ENCODE measurements at regions of chr11 and their contacts with region 1.

Region 1: DNA sequence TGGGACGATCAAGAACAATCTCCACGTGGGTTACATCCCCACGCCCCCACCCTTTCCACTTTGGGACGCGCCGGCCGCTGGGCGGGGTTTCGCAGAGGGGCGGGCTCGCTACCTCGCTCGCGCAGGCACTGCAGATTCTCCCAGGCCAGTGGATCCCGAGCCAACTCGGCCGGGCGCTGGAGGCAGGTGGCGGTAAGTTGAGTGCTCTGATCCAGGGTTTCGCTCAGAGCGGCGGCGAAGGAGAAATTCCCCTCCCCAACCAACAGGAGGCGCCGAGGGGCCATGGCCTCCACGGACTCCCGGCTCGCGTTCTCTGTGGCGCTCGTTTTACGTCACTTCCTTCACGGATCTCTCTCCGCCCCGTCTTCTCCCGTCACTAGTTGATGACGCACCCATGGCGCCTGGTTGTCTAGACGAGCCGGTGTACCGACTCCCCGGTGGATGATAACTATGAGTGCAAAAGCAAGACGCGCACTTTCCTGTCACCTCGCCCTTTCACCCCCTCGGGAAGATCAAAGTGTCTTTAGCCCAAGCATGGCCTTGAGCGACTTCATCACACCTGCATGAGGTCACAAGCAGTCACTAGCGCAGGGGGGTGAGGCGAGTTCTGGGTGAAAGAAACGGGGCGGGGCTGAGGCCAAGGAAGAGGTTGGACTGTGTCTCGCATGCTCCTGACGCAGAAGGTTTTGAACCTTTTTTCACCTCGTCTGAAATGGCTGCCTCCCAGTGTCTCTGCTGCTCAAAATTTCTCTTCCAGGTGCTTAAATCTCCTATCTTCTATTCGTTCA is at the starts of genes CFAP68 and FDXACB1:
- DNase-seq: peak; percentile 96
- ATAC-seq: peak; percentile 96
- total RNA-seq, gene CFAP68: 32.4 TPM
- total RNA-seq, gene FDXACB1: 0.86 TPM

Region 2: GRCh38 chr11:111913997-111914396 is 35.0 kb after region 1 on chr11:
- intact Hi-C with region 1: no loop called
- DNase-seq: peak; percentile 62
- ATAC-seq: peak; percentile 13

Region 3: DNA sequence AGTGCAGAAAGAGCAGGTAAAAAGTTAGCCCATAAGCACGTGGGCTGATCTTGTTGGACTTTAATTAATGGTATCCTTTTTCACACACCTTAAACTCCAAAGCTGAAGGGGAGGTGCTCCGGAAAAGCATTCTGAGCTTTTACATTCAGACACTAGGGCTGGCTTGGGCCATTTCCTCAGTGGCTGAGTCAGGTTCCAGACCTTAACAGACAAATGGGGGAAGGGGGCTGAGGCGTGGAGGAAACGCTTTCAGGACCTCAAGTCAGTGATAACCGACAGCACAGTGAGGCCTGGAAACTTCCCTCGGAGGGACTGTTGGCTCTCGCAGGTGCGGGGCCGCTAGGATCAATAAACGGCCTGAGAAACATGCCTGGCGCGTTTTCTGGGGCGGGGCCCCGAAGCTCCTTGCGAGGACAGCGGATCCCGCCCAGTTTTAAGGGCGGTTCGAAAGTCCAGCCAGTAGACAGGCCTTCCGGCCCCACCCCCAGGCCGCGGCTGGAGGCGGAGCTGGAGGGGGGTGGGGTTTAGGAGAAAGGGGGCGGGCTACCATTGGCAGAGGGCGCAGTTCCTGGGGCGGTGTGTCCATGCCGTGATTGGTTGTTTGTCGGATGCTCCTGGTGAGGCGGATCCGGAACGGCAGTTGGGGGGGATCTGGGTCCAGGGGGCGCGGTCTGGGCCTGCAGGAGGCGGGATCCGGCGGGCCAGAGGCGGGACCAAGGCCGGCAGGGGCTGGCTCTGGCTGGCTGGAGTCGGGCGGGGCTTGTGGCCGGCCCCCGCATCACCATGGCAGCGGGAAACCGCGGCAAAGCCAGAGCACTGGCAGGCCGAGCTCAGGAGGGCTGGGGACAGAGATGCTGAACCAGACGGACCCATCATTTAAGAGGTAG is 47.7 kb after region 1 on chr11:
- intact Hi-C with region 1: loop called (anchors 5 kb)
- DNase-seq: peak; percentile 98
- ATAC-seq: peak; percentile 94

Region 4: GRCh38 chr11:111982019-111982464 is 103.0 kb after region 1 on chr11:
- intact Hi-C with region 1: loop called (anchors 5 kb)
- DNase-seq: peak; percentile 57
- ATAC-seq: peak; percentile 67

Region 5: GRCh38 chr11:112086422-112087191 is 207.6 kb after region 1 on chr11 and contains the starts of genes SDHD and TIMM8B:
- intact Hi-C with region 1: loop called (anchors 10 kb)
- DNase-seq: peak; percentile 95
- ATAC-seq: peak; percentile 97
- total RNA-seq, gene SDHD: 255 TPM
- total RNA-seq, gene TIMM8B: 173 TPM

Measured in Right ventricle myocardium superior (tissue), 1 donor.